Activated T-helper 2 cell treated with anti-CD3 and anti-CD28 coated beads, Interferon-gamma antibody, Interleukin-2, Interleukin-4, amounts not matched to agents 10 μg/mL and 5 μg/mL and 100 μg/mL, durations not matched to agents 14 hours and 24 hours and 36 hours (primary cell): ENCODE measurements at regions of chr19 and their contacts with region 1.

Region 1: GRCh38 chr19:38559428-38560401 is 58.0 kb downstream of the MAP4K1 start:
- DNase-seq: peak; percentile 42
- H3K4me3 Mint-ChIP-seq: peak overlapping the region; percentile 56
- H3K27ac Mint-ChIP-seq: peak overlapping the region; percentile 81
- H3K4me1 Mint-ChIP-seq: peaks cover 43% of the 10 kb centered on the region
- H3K27me3 Mint-ChIP-seq: peaks cover 3% of the 10 kb centered on the region

Region 2: GRCh38 chr19:38478273-38478967 is 81.3 kb before region 1 on chr19:
- intact Hi-C with region 1: no loop called
- DNase-seq: no peak
- H3K4me3 Mint-ChIP-seq: no peak overlapping the region
- H3K27ac Mint-ChIP-seq: peak overlapping the region; percentile 28
- H3K4me1 Mint-ChIP-seq: peaks cover 2% of the 10 kb centered on the region
- H3K27me3 Mint-ChIP-seq: no peaks in the 10 kb centered on the region

Region 3: GRCh38 chr19:38527466-38528136 is 32.1 kb before region 1 on chr19:
- intact Hi-C with region 1: no loop called
- DNase-seq: no peak
- H3K4me3 Mint-ChIP-seq: peak overlapping the region; percentile 44
- H3K27ac Mint-ChIP-seq: peak overlapping the region; percentile 9
- H3K4me1 Mint-ChIP-seq: peaks cover 6% of the 10 kb centered on the region
- H3K27me3 Mint-ChIP-seq: no peaks in the 10 kb centered on the region

Region 4: GRCh38 chr19:38544034-38544958 is 15.4 kb before region 1 on chr19:
- intact Hi-C with region 1: loop called (anchors 1 kb)
- DNase-seq: peak; percentile 19
- H3K4me3 Mint-ChIP-seq: peak overlapping the region; percentile 32
- H3K27ac Mint-ChIP-seq: peak overlapping the region; percentile 69
- H3K4me1 Mint-ChIP-seq: peaks cover 25% of the 10 kb centered on the region
- H3K27me3 Mint-ChIP-seq: no peaks in the 10 kb centered on the region

Region 5: DNA sequence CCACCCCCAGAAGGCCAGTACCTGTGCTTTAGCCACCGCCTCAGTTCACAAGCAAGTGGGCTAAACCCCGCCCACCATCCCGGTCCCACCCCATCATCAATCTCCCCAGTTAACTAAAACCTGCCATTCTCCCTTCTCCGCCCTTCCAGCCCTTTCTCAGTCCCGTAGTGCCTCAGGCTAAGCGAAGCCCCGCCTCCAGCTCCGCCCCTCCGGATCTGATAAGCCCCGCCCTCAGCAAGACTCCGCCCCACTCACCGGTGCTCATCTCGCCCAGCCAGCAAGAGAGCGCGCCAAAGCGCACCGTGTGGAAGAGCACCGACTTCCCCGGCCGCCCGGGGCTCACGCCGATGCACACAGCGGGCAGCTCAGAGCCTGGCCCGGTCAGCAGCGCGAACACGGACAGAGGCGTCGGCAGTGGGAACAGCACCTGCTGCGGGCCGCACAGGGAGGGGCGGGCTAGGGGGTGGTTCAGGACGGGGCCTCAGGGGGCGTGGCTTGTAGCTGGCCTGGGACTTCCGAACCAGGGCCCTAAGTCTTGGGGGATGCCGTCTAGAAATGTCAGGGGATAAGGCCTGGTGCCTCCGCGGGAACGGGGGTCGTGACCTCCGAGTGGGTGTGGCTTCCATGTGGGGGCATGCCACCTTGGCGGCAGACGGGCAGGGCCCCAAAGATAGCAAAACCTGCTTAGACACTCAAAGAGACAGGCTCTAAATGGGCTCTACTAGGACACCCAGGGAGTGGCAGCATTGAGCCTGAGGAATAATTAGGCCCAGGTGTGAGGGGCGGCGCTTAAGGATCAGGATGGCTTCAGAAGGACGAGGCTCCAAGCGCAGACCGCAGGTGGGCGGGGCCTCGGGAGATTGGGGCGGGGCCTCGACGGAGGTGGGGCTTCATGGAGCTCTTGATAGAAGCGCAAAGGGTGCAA is 36.6 kb after region 1 on chr19:
- intact Hi-C with region 1: no loop called
- DNase-seq: no peak
- H3K4me3 Mint-ChIP-seq: no peak overlapping the region
- H3K27ac Mint-ChIP-seq: no peak overlapping the region
- H3K4me1 Mint-ChIP-seq: peaks cover 3% of the 10 kb centered on the region
- H3K27me3 Mint-ChIP-seq: no peaks in the 10 kb centered on the region